ENCODE measurements at regions of chr14 and their contacts with region 1.

Region 1: DNA sequence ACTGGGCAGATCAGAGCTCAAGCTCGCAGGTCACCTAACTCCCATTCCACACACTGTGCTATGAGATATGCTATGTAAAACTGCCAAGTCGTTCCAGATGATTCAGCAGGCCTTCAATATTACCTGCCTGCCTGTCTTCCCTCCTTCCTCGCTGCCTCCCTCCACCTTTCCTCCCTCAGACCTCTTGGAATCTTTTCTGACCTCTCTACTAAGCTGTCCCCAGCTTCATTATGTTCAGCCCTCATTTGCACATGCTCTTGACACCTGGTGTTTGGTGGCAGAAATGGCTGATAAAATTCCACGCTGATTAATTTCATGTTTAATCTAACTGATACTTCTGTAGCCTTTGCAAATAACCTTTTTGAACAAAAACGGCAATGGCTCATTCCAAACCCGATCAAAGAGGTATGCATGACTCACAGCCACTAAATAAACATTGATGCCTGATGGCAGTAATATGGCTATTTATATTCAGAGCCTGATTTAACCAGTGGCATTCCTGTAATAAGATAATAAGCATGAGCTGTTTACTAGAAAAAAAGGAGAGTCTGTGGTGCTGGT is 130.8 kb upstream of the EGLN3 start:
- DNase-seq: no peak

Region 2: DNA sequence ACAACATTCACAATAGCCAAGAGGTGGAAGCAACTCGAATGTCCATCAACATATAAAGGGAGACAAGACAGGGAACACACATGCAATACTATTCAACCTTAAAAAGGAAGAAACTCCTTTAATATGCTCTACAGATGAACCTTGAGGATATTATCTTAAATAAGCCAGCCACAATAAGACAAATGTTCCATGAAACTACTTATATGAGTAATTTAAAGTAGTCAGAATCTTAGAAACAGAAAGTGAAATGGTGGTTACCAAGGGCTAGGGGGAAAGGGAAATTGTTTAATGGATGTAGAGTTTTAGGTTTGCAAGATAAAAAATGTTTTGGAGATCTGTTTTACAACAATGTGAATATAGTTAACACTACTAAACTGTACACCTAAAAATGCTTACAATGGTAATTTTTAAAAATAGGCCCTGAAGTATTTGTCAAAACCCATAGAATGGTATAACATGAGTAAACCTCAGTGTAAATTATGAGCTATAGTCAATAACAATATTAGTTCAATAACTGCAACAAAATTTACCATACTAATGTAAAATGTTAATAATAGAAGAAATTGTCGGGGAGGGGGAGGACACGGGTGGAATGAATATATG is 201.9 kb before region 1 on chr14:
- intact Hi-C with region 1: no loop called
- DNase-seq: no peak

Region 3: GRCh38 chr14:33950320-33951182 is 131.1 kb before region 1 on chr14 and contains the start of gene EGLN3:
- intact Hi-C with region 1: loop called (anchors 5 kb)
- DNase-seq: peak; percentile 95
- total RNA-seq, gene EGLN3: 326 TPM

Region 4: GRCh38 chr14:34030864-34031263 is 50.8 kb before region 1 on chr14:
- intact Hi-C with region 1: loop called (anchors 1 kb)
- DNase-seq: no peak

Region 5: GRCh38 chr14:34059855-34060638 is 21.6 kb before region 1 on chr14:
- intact Hi-C with region 1: loop called (anchors 1 kb)
- DNase-seq: peak; percentile 91

Region 6: DNA sequence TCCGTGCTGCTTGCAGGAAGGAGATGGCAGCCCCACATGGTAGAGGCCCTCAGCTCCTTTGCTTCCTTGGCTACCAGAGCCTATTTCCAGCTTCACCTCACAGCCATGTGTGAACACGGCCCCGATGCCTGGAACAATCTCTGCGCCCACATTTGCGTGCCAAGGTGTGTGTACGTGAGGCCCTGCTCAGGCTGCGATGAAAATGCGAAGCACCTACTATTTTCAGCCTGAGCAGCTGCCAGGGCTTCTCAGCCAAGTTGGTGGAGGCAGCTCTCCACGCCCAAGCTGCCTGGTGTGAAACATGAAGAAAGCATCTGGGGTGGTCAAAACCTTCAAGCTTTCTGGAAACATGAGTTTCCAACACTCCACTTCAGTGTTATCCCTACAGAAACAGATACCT is 47.0 kb after region 1 on chr14:
- intact Hi-C with region 1: loop called (anchors 1 kb)
- DNase-seq: no peak

Region 7: DNA sequence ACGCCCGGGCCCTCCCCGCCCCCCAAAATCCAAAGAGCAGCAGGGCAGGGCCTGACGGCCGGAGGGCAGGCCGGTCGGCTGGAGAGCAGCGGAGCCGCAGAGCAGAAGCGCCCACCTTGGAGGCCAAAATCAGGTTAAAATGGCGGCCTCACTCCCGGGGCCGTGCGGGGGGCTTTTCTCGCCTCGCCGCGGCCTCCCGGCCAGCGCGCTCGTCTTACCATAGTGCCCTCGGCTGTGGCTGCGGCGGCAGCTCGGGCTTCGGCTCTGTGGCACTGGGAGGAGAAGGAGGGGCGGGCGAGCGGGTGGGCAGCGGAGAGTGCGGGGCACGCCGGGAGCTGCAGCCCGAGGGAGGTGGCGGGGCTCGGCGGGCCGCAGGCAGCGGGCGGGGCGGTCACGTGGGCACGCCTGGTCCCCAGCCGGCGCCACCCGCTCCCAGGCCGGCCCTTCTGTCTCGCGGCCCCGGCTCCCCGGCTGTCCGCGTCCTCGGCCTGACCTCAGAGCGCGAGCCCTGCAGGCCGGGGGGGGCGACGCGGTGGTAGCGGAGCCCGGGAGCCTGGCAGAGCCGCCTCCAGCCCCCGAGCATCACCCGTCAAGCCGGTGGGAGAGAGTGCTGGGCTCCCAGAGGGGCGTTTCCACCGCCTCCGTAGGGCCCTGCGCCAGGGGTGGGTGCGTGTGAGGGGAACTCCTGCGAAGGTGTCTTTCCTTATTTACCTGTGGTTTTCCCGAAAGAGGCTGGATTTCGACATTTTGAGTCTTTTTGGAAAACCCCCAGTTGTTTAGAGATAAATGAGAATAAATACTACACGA is 632.9 kb after region 1 on chr14 and contains the start of gene CFL2:
- intact Hi-C with region 1: no loop called
- DNase-seq: peak; percentile 91
- total RNA-seq, gene CFL2: 673 TPM